Naive thymus-derived CD4-positive, alpha-beta T cell (primary cell): ENCODE measurements at regions of chr19 and their contacts with region 1.

Region 1: GRCh38 chr19:40444192-40445028 is at the start of gene SERTAD3:
- DNase-seq: peak; percentile 94 to 99 (median 98)
- ATAC-seq: peak; percentile 82
- H3K4me3 ChIP-seq: peak within 1 kb of the TSS; percentile 97
- H3K4me3 Mint-ChIP-seq: peak within 1 kb of the TSS; percentile 96 to 100 (median 98)
- H3K27ac ChIP-seq: peak within 1 kb of the TSS; percentile 89
- H3K27ac Mint-ChIP-seq: peak within 1 kb of the TSS; percentile 94 to 99 (median 97)
- H3K4me1 ChIP-seq: peaks cover 8 to 12% of the 10 kb centered on the region in 2 donors
- H3K4me1 Mint-ChIP-seq: peaks cover 17 to 31% (median 21%) of the 10 kb centered on the region in 7 donors
- H3K27me3 ChIP-seq: no peaks in the 10 kb centered on the region
- H3K27me3 Mint-ChIP-seq: no peaks in the 10 kb centered on the region
- total RNA-seq, gene SERTAD3: 15.2 to 44.1 (median 17.8) TPM

Region 2: DNA sequence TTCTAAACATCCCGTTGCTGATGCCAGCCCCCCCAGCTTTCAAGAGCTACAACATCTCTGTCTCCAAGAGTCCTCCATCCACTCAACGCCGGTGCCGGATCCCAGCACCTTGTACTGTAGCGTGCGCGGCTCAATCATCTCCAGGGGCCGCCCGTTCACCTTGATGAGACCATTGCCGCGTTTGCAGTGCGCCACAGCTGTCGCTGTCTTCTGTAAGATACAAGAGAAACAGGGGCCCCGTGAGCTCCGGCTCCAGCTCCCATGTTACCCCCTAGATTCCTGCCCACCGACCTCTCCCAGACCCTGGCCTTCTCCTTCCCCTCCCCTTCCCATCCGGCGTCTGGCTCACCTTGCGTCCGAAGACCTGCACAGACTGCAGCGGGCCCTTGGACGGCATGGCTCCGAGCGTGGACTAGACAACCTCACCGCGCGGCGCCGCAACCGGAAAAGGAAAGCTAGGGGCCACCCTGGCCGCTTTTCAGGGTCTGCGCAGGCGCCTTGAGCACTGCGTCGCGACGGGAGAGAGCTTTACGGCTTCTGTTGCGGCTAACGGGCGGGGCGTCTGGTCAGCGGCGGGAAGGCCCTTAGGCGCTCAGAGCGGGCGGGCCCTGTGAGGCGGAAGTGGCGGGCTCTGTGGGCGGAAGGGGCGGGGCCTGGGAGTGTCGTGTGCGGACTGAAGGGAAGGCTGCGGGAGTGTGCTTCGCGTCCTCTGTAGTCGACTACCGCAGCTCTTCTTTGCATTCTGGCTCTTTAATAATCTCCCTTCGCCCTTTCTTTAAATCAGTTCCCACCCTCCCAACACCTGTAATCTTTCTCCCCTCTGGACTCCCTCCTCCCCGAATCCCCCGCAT is 1008.7 kb before region 1 on chr19 and contains the start of gene RPS16:
- CTCF ChIA-PET with region 1: no interaction called
- POLR2A ChIA-PET with region 1: no interaction called
- intact Hi-C with region 1: loop called in 1 of 2 experiments (anchors 10 kb)
- DNase-seq: peak; percentile 93 to 100 (median 98)
- ATAC-seq: peak; percentile 98
- H3K4me3 ChIP-seq: peak within 1 kb of the TSS; percentile 98
- H3K4me3 Mint-ChIP-seq: peak within 1 kb of the TSS; percentile 92 to 100 (median 98)
- H3K27ac ChIP-seq: peak within 1 kb of the TSS; percentile 97
- H3K27ac Mint-ChIP-seq: peak within 1 kb of the TSS; percentile 95 to 100 (median 99)
- H3K4me1 ChIP-seq: peaks cover 27% of the 10 kb centered on the region in 2 donors
- H3K4me1 Mint-ChIP-seq: peaks cover 20 to 53% (median 40%) of the 10 kb centered on the region in 7 donors
- H3K27me3 ChIP-seq: no peaks in the 10 kb centered on the region
- H3K27me3 Mint-ChIP-seq: peaks cover 0 to 5% (median 0%) of the 10 kb centered on the region in 5 donors
- total RNA-seq, gene RPS16: 2,281 to 4,335 (median 4,063) TPM

Region 3: DNA sequence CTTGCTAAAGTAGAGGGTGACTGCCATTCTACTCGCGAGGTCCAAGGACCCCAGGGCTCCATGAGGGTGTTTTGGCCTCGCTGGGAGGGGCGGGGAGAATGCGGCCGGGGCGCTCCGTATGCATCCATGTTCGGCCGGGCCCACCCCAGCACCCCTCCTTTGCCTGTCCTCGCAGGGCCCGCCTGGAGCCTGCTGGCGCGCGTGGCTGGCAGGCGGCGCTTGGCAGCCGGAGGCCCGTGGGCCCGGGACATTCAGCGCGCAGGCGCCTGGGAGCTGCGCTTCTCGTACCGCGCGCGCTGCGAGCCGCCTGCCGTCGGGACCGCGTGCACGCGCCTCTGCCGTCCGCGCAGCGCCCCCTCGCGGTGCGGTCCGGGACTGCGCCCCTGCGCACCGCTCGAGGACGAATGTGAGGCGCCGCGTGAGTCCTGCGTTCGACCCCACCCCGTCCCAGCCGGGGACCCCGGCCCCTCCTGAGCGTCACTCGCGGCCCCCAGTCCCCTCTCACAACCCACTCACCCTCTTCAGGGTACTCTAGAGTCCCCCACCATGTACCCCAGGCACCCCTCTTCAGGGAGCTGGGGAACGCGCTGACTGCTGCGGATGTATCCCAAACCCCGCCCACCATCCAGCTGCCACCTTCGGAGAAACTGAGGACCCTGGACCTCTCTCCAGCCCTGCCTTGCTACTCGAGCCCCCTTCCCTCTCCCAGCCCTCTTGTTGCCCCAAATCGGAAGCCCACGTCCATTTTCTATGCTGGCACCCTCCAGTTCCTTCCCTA is 941.6 kb before region 1 on chr19:
- CTCF ChIA-PET with region 1: no interaction called
- POLR2A ChIA-PET with region 1: no interaction called
- intact Hi-C with region 1: no loop called
- DNase-seq: peak; percentile 67 to 88 (median 78)
- ATAC-seq: peak; percentile 94
- H3K4me3 ChIP-seq: no peak overlapping the region
- H3K4me3 Mint-ChIP-seq: peak overlapping the region in 5 of 10 donors; percentile 4 to 48 (median 16)
- H3K27ac ChIP-seq: no peak overlapping the region
- H3K27ac Mint-ChIP-seq: peak overlapping the region in 3 of 9 donors; percentile 48 to 71 (median 66)
- H3K4me1 ChIP-seq: peaks cover 11 to 21% of the 10 kb centered on the region in 2 donors
- H3K4me1 Mint-ChIP-seq: peaks cover 26 to 38% (median 35%) of the 10 kb centered on the region in 7 donors
- H3K27me3 ChIP-seq: peaks cover 12 to 19% of the 10 kb centered on the region in 2 donors
- H3K27me3 Mint-ChIP-seq: peaks cover 55 to 73% (median 62%) of the 10 kb centered on the region in 5 donors

Region 4: GRCh38 chr19:40139533-40140287 is 304.7 kb before region 1 on chr19:
- CTCF ChIA-PET with region 1: no interaction called
- POLR2A ChIA-PET with region 1: no interaction called
- intact Hi-C with region 1: loop called in 1 of 2 experiments (anchors 1 kb)
- DNase-seq: peak in 6 of 9 donors; percentile 38 to 63 (median 55)
- ATAC-seq: peak; percentile 43
- H3K4me3 ChIP-seq: no peak overlapping the region
- H3K4me3 Mint-ChIP-seq: peak overlapping the region in 1 of 10 donors; percentile 16
- H3K27ac ChIP-seq: no peak overlapping the region
- H3K27ac Mint-ChIP-seq: peak overlapping the region in 5 of 9 donors; percentile 0 to 59 (median 31)
- H3K4me1 ChIP-seq: peaks cover 16 to 18% of the 10 kb centered on the region in 2 donors
- H3K4me1 Mint-ChIP-seq: peaks cover 0 to 29% (median 18%) of the 10 kb centered on the region in 7 donors
- H3K27me3 ChIP-seq: no peaks in the 10 kb centered on the region
- H3K27me3 Mint-ChIP-seq: peaks cover 0 to 21% (median 11%) of the 10 kb centered on the region in 5 donors

Region 5: GRCh38 chr19:40403262-40403984 is 41.0 kb before region 1 on chr19:
- CTCF ChIA-PET with region 1: no interaction called
- POLR2A ChIA-PET with region 1: interaction called, 21 read pairs
- intact Hi-C with region 1: loop called (anchors 1 kb)
- DNase-seq: peak; percentile 54 to 84 (median 69)
- ATAC-seq: peak; percentile 80
- H3K4me3 ChIP-seq: peak overlapping the region; percentile 74
- H3K4me3 Mint-ChIP-seq: peak overlapping the region; percentile 78 to 98 (median 93)
- H3K27ac ChIP-seq: peak overlapping the region; percentile 79
- H3K27ac Mint-ChIP-seq: peak overlapping the region; percentile 75 to 93 (median 86)
- H3K4me1 ChIP-seq: peaks cover 5 to 12% of the 10 kb centered on the region in 2 donors
- H3K4me1 Mint-ChIP-seq: peaks cover 22 to 42% (median 36%) of the 10 kb centered on the region in 7 donors
- H3K27me3 ChIP-seq: no peaks in the 10 kb centered on the region
- H3K27me3 Mint-ChIP-seq: peaks cover 0 to 6% (median 0%) of the 10 kb centered on the region in 5 donors

Region 6: DNA sequence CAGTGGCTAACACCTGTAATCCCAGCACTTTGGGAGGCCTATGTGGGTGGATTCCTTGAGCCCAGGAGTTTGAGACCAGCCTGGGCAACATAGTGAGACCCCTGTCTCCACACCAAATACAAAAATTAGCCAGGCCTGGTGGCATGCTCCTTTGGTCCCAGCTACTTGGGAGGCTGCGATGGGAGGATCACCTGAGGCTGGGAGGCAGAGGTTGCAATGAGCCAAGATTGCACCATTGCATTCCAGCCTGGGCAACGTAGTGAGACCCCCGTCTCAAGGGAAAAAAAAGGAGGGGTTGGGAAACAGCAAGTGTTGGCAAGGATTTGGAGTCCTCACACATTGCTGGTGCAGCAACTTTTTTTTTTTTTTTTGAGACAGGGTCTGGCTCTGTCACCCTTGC is 41.6 kb after region 1 on chr19:
- CTCF ChIA-PET with region 1: no interaction called
- POLR2A ChIA-PET with region 1: no interaction called
- intact Hi-C with region 1: no loop called
- DNase-seq: no peak
- ATAC-seq: no peak
- H3K4me3 ChIP-seq: no peak overlapping the region
- H3K4me3 Mint-ChIP-seq: no peak overlapping the region
- H3K27ac ChIP-seq: no peak overlapping the region
- H3K27ac Mint-ChIP-seq: no peak overlapping the region
- H3K4me1 ChIP-seq: no peaks in the 10 kb centered on the region
- H3K4me1 Mint-ChIP-seq: peaks cover 0 to 9% (median 7%) of the 10 kb centered on the region in 7 donors
- H3K27me3 ChIP-seq: no peaks in the 10 kb centered on the region
- H3K27me3 Mint-ChIP-seq: peaks cover 6 to 40% (median 20%) of the 10 kb centered on the region in 5 donors

Region 7: GRCh38 chr19:40576585-40577451 is 132.4 kb after region 1 on chr19 and contains the start of gene SHKBP1:
- CTCF ChIA-PET with region 1: no interaction called
- POLR2A ChIA-PET with region 1: no interaction called
- intact Hi-C with region 1: loop called in 1 of 2 experiments (anchors 1 kb)
- DNase-seq: peak; percentile 84 to 93 (median 92)
- ATAC-seq: peak; percentile 97
- H3K4me3 ChIP-seq: peak within 1 kb of the TSS; percentile 84
- H3K4me3 Mint-ChIP-seq: peak within 1 kb of the TSS; percentile 80 to 96 (median 90)
- H3K27ac ChIP-seq: peak within 1 kb of the TSS; percentile 77
- H3K27ac Mint-ChIP-seq: peak within 1 kb of the TSS; percentile 79 to 96 (median 87)
- H3K4me1 ChIP-seq: peaks cover 14 to 22% of the 10 kb centered on the region in 2 donors
- H3K4me1 Mint-ChIP-seq: peaks cover 16 to 26% (median 20%) of the 10 kb centered on the region in 7 donors
- H3K27me3 ChIP-seq: no peaks in the 10 kb centered on the region
- H3K27me3 Mint-ChIP-seq: no peaks in the 10 kb centered on the region
- total RNA-seq, gene SHKBP1: 98.4 to 218 (median 139) TPM

Region 8: GRCh38 chr19:40750059-40750873 is 305.9 kb after region 1 on chr19 and contains the start of gene ACTMAP:
- CTCF ChIA-PET with region 1: no interaction called
- POLR2A ChIA-PET with region 1: no interaction called
- intact Hi-C with region 1: loop called in 1 of 2 experiments (anchors 1 kb)
- DNase-seq: peak; percentile 95 to 100 (median 100)
- ATAC-seq: peak; percentile 93
- H3K4me3 ChIP-seq: peak within 1 kb of the TSS; percentile 96
- H3K4me3 Mint-ChIP-seq: peak within 1 kb of the TSS; percentile 93 to 100 (median 96)
- H3K27ac ChIP-seq: peak within 1 kb of the TSS; percentile 84
- H3K27ac Mint-ChIP-seq: peak within 1 kb of the TSS; percentile 90 to 99 (median 98)
- H3K4me1 ChIP-seq: peaks cover 11 to 27% of the 10 kb centered on the region in 2 donors
- H3K4me1 Mint-ChIP-seq: peaks cover 31 to 43% (median 42%) of the 10 kb centered on the region in 7 donors
- H3K27me3 ChIP-seq: no peaks in the 10 kb centered on the region
- H3K27me3 Mint-ChIP-seq: no peaks in the 10 kb centered on the region
- total RNA-seq, gene ACTMAP: 5.5 to 13.7 (median 7.8) TPM

Region 9: DNA sequence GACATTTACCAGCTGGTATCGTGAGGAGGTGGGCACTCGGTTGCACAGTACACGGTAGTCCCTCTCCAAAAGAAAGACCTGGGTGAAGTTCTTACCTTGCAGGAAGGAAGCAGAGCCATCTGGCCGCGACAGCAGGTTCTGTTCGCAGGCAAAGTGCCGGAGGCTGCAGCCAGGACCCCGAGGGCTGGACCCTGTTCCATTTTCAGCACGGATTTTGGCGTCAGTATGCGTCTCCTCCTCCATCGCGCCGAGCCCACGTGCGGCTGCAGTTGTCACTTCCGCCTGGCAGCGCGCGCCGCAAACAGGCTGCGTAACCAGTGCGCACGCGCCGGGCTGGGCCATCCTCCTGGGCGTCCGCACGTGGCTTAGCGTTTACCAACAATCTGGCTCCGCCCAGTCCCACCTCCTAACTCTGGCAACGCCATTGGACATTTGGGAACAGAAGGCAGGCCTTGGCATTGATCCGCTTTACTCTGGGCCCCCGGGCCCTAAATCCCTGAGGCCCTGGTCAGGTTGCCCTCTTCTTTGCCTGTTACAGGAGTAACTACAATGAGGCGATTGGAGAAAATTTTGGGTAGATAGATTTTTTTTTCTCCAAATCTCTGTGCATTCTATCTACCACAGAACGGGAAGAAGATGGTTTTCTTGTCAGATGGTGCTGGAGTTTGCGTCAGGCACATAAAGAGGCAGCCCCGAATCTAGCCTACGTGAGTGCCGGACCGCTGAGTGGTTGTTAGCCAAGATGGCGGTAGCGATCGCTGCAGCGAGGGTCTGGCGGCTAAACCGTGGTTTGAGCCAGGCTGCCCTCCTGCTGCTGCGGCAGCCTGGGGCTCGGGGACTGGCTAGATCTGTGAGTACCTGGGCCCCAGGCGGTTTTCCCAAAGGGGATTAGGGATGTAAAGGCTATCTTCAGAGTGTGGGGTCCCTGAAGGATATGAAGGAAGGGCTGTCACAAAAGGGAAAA is 953.0 kb after region 1 on chr19 and contains the starts of genes BCKDHA and EXOSC5:
- CTCF ChIA-PET with region 1: no interaction called
- POLR2A ChIA-PET with region 1: interaction called, 3 read pairs
- intact Hi-C with region 1: loop called in 1 of 2 experiments (anchors 10 kb)
- DNase-seq: peak; percentile 96 to 100 (median 99)
- ATAC-seq: peak; percentile 99
- H3K4me3 ChIP-seq: peak within 1 kb of the TSS; percentile 96
- H3K4me3 Mint-ChIP-seq: peak within 1 kb of the TSS; percentile 95 to 99 (median 98)
- H3K27ac ChIP-seq: peak within 1 kb of the TSS; percentile 89
- H3K27ac Mint-ChIP-seq: peak within 1 kb of the TSS; percentile 99 to 100 (median 100)
- H3K4me1 ChIP-seq: peaks cover 19 to 23% of the 10 kb centered on the region in 2 donors
- H3K4me1 Mint-ChIP-seq: peaks cover 33 to 61% (median 50%) of the 10 kb centered on the region in 7 donors
- H3K27me3 ChIP-seq: no peaks in the 10 kb centered on the region
- H3K27me3 Mint-ChIP-seq: no peaks in the 10 kb centered on the region
- total RNA-seq, gene BCKDHA: 19.4 to 25.0 (median 20.5) TPM
- total RNA-seq, gene EXOSC5: 15.0 to 37.5 (median 20.6) TPM